ENCODE measurements at regions of chrX and their contacts with region 1.

Region 1: DNA sequence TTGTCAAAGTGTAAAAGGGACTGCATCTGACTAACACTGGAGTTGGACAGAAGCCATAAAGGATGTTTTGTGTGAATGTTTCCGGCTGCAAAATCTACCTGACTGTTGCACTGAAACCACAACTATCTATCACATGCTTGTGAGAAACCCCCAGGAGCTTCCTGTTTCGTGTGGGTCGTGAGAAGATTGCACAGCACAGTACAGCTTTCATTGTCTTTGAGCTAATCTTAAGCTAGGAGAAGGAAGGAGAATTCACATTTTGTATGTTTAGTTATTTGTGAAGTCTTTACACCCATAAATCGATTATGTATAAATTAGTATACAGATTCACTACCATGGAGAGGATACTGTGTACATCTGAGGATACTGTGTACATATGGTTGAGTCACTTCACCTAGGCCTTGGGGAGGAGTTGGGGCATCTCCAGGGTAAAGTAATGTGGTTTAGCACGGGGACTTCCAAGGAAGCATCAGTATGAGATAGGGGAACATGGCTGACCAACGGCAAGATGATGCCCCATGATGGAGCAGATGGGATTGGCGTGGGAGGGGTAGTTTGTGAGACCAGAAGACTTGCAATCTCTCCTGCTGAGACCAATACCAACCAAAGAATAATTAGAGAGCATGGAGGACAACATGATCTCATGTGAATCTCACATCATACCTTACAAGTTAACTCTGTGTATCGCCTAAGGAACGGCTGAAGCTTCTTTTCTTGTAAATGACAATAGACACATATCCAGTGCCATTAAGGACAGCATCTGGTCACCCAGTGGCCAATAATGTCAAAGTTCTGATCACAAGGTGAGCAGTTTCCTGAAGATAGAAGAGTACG is 43.1 kb upstream of the FAM9C start:
- DNase-seq: peak in 11 of 14 experiments; percentile 34 to 94 (median 61)
- ATAC-seq: peak; percentile 63
- H3K4me3 ChIP-seq: peak overlapping the region; percentile 22
- H3K4me3 Mint-ChIP-seq: peak overlapping the region; percentile 85
- H3K27ac ChIP-seq: peak overlapping the region; percentile 91 to 94
- H3K27ac Mint-ChIP-seq: peak overlapping the region; percentile 95
- H3K4me1 ChIP-seq: peaks cover 72% of the 10 kb centered on the region
- H3K4me1 Mint-ChIP-seq: peaks cover 90% of the 10 kb centered on the region
- H3K27me3 ChIP-seq: no peaks in the 10 kb centered on the region
- H3K27me3 Mint-ChIP-seq: no peaks in the 10 kb centered on the region
- CTCF ChIP-seq: no peak

Region 2: GRCh38 chrX:11575332-11575731 is 1512.2 kb before region 1 on chrX:
- CTCF ChIA-PET with region 1: no interaction called
- POLR2A ChIA-PET with region 1: no interaction called
- intact Hi-C with region 1: no loop called
- DNase-seq: no peak
- ATAC-seq: no peak
- H3K4me3 ChIP-seq: no peak overlapping the region
- H3K4me3 Mint-ChIP-seq: no peak overlapping the region
- H3K27ac ChIP-seq: no peak overlapping the region
- H3K27ac Mint-ChIP-seq: no peak overlapping the region
- H3K4me1 ChIP-seq: no peaks in the 10 kb centered on the region
- H3K4me1 Mint-ChIP-seq: no peaks in the 10 kb centered on the region
- H3K27me3 ChIP-seq: no peaks in the 10 kb centered on the region
- H3K27me3 Mint-ChIP-seq: peaks cover 16% of the 10 kb centered on the region
- CTCF ChIP-seq: no peak

Region 3: GRCh38 chrX:12984629-12985319 is 102.8 kb before region 1 on chrX:
- CTCF ChIA-PET with region 1: interaction called, 50 read pairs
- POLR2A ChIA-PET with region 1: interaction called, 1,205 read pairs
- intact Hi-C with region 1: no loop called
- DNase-seq: peak in 10 of 14 experiments; percentile 35 to 80 (median 52)
- ATAC-seq: peak; percentile 77
- H3K4me3 ChIP-seq: peak overlapping the region; percentile 12
- H3K4me3 Mint-ChIP-seq: peak overlapping the region; percentile 82
- H3K27ac ChIP-seq: peak overlapping the region; percentile 66 to 69
- H3K27ac Mint-ChIP-seq: peak overlapping the region; percentile 95
- H3K4me1 ChIP-seq: peaks cover 80% of the 10 kb centered on the region
- H3K4me1 Mint-ChIP-seq: peaks cover 76% of the 10 kb centered on the region
- H3K27me3 ChIP-seq: no peaks in the 10 kb centered on the region
- H3K27me3 Mint-ChIP-seq: no peaks in the 10 kb centered on the region
- CTCF ChIP-seq: no peak

Region 4: DNA sequence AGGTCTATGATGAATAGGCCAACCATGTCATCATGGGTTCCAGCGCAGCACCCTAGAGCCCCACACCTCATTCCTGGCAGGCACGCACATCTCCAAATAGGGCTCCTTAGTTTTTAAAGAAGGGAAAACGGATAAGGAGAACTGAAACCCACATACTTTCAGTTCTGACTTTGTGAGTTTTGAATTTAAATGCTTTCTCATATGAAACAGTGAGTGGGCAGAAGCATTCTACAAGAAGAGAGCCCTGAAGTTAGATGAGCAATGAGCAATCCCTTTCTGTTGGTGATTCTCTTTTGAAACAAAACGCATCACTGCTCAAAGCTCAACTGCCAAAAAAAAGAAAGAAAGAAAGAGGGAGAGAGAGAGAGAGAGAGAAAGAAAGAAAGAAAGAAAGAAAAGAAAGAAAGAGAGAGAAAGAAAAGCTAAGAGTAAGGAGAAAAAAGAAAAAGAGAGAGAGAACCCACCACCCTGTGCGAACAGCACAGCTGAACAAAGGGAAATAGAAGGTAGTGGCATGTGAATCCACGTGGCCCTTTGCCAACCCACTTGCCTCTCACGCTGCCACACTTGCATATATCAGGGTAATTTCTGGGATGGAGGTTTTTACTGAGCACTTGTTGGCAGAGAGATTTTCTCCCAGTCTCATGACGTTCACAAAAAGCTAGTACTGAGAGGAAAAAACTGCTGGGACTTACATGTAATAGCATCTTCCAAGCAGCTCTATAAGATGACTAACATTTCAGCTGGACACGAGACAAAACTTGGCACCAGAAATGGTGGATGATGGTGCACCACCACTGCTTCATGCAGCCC is 81.7 kb before region 1 on chrX:
- CTCF ChIA-PET with region 1: interaction called, 9 read pairs
- POLR2A ChIA-PET with region 1: interaction called, 102 read pairs
- intact Hi-C with region 1: no loop called
- DNase-seq: peak in 9 of 14 experiments; percentile 13 to 63 (median 26)
- ATAC-seq: peak; percentile 60
- H3K4me3 ChIP-seq: no peak overlapping the region
- H3K4me3 Mint-ChIP-seq: peak overlapping the region; percentile 86
- H3K27ac ChIP-seq: peak overlapping the region; percentile 43 to 48
- H3K27ac Mint-ChIP-seq: peak overlapping the region; percentile 96
- H3K4me1 ChIP-seq: peaks cover 60% of the 10 kb centered on the region
- H3K4me1 Mint-ChIP-seq: peaks cover 75% of the 10 kb centered on the region
- H3K27me3 ChIP-seq: no peaks in the 10 kb centered on the region
- H3K27me3 Mint-ChIP-seq: no peaks in the 10 kb centered on the region
- CTCF ChIP-seq: no peak

Region 5: GRCh38 chrX:13029341-13029740 is 58.2 kb before region 1 on chrX:
- CTCF ChIA-PET with region 1: interaction called, 13 read pairs
- POLR2A ChIA-PET with region 1: interaction called, 91 read pairs
- intact Hi-C with region 1: loop called in 1 of 2 experiments (anchors 5 kb)
- DNase-seq: peak in 7 of 14 experiments; percentile 9 to 56 (median 40)
- ATAC-seq: peak; percentile 42
- H3K4me3 ChIP-seq: no peak overlapping the region
- H3K4me3 Mint-ChIP-seq: peak overlapping the region; percentile 70
- H3K27ac ChIP-seq: peak overlapping the region; percentile 19 to 52
- H3K27ac Mint-ChIP-seq: peak overlapping the region; percentile 98
- H3K4me1 ChIP-seq: peaks cover 53% of the 10 kb centered on the region
- H3K4me1 Mint-ChIP-seq: peaks cover 83% of the 10 kb centered on the region
- H3K27me3 ChIP-seq: no peaks in the 10 kb centered on the region
- H3K27me3 Mint-ChIP-seq: no peaks in the 10 kb centered on the region
- CTCF ChIP-seq: no peak

Region 6: GRCh38 chrX:13069771-13070416 is 17.6 kb before region 1 on chrX:
- CTCF ChIA-PET with region 1: interaction called, 4 read pairs
- POLR2A ChIA-PET with region 1: interaction called, 66 read pairs
- intact Hi-C with region 1: loop called in 1 of 2 experiments (anchors 1 kb)
- DNase-seq: no peak
- ATAC-seq: no peak
- H3K4me3 ChIP-seq: no peak overlapping the region
- H3K4me3 Mint-ChIP-seq: no peak overlapping the region
- H3K27ac ChIP-seq: no peak overlapping the region
- H3K27ac Mint-ChIP-seq: no peak overlapping the region
- H3K4me1 ChIP-seq: peaks cover 25% of the 10 kb centered on the region
- H3K4me1 Mint-ChIP-seq: peaks cover 32% of the 10 kb centered on the region
- H3K27me3 ChIP-seq: no peaks in the 10 kb centered on the region
- H3K27me3 Mint-ChIP-seq: no peaks in the 10 kb centered on the region
- CTCF ChIP-seq: no peak

Region 7: DNA sequence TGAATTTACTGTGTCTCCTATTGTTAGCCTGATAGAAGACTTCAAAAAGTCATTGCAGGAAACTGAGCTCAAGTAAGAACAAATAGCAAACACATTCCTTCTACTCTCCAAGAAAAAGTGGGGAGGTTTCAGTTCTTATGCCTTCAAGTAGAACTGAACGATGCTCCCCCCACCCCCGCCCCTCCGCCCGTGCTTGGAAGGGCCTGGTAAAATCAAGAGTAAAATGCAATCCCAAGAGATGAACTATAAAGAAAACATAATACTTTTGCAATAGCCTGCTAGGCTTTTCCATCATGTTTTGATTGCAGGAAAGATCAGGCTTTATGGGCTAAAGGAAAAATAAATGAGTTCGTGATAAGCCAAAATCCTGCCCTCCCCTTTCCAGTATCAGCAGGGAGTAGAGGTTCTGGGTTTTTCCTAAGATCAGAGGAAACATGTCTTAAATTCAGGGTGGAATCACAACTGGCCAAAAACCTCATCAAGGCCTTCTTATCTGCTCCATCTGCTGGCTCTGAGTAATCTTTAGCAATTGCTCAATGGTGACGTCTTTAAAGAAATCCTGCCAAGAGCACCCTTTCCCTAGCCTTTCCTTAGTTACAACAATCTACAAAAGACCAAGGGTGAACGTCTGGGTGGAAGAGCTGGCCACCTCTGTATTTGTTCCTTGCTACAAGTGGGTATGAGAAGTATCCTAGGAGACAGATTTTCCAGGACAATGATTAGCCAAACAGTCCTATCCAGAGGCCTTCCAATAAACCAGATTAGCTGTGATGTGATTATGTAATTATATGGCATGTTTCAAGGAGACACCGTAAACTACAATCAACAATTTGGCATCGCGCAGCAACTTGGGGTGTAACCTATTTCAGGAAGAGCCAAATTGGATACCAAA is 23.1 kb after region 1 on chrX:
- CTCF ChIA-PET with region 1: no interaction called
- POLR2A ChIA-PET with region 1: no interaction called
- intact Hi-C with region 1: no loop called
- DNase-seq: peak in 2 of 14 experiments; percentile 13 to 30
- ATAC-seq: no peak
- H3K4me3 ChIP-seq: no peak overlapping the region
- H3K4me3 Mint-ChIP-seq: no peak overlapping the region
- H3K27ac ChIP-seq: no peak overlapping the region
- H3K27ac Mint-ChIP-seq: no peak overlapping the region
- H3K4me1 ChIP-seq: no peaks in the 10 kb centered on the region
- H3K4me1 Mint-ChIP-seq: no peaks in the 10 kb centered on the region
- H3K27me3 ChIP-seq: no peaks in the 10 kb centered on the region
- H3K27me3 Mint-ChIP-seq: no peaks in the 10 kb centered on the region
- CTCF ChIP-seq: no peak

Region 8: DNA sequence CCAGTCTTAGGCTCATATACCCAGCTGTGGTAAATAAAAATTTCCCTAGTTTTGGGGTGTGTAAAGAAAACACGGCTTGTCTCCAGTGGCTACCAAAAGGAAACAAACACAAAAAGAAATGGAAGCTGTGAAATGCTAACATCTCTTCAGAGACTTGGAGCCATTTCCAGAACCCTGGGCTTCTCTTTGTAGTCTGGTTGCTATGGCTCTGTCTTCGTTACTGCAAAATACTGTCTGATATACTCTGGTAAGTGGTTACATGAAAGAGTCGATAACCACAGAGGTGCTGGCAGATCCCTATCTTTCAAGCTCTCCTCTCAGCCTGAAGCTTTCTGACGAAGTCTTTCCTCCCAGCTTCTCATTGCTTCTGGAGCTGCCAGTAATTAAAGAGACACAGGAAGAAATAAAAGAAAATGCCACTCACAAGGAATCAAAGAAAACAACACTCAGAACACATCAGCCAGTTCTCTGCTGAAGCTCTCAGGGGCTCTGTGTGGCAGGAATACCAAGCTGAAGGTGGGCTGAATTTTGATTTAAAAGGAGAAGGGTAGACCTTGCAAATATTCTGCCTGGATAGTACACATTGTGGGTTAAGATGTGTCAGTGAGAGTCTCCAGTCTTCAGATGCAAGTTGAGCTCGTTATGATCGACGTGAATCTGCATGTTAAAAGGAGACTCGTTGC is 64.4 kb after region 1 on chrX:
- CTCF ChIA-PET with region 1: interaction called, 9 read pairs
- POLR2A ChIA-PET with region 1: interaction called, 9 read pairs
- intact Hi-C with region 1: loop called in 1 of 2 experiments (anchors 5 kb)
- DNase-seq: peak in 10 of 14 experiments; percentile 5 to 91 (median 36)
- ATAC-seq: peak; percentile 89
- H3K4me3 ChIP-seq: peak overlapping the region; percentile 7
- H3K4me3 Mint-ChIP-seq: peak overlapping the region; percentile 62
- H3K27ac ChIP-seq: peak overlapping the region in 1 of 2 donors; percentile 62
- H3K27ac Mint-ChIP-seq: peak overlapping the region; percentile 82
- H3K4me1 ChIP-seq: peaks cover 16% of the 10 kb centered on the region
- H3K4me1 Mint-ChIP-seq: peaks cover 15% of the 10 kb centered on the region
- H3K27me3 ChIP-seq: no peaks in the 10 kb centered on the region
- H3K27me3 Mint-ChIP-seq: no peaks in the 10 kb centered on the region
- CTCF ChIP-seq: no peak